GM12878 (cell line): ENCODE measurements at regions of chr20 and their contacts with region 1.

Region 1: GRCh38 chr20:25623736-25624499 is at the start of gene NANP:
- DNase-seq: peak; percentile 86
- ATAC-seq: peak; percentile 88
- H3K4me3 ChIP-seq: peak within 1 kb of the TSS; percentile 86
- H3K27ac ChIP-seq: peak within 1 kb of the TSS; percentile 93
- H3K4me1 ChIP-seq: peaks cover 3% of the 10 kb centered on the region; the same call in 1 of the 2 replicates
- H3K27me3 ChIP-seq: no peaks in the 10 kb centered on the region
- CTCF ChIP-seq: 0 out of 6 replicates have a peak, but pooled peaks of 1 of the 3 experiments have one; percentile 10
- EP300 ChIP-seq: peak in 1 of 2 experiments; percentile 17; a peak in 1 of 4 replicates
- POLR2A ChIP-seq: peak; percentile 86
- RAD21 ChIP-seq: no peak
- polyA plus RNA-seq, gene NANP: 4.2 to 4.6 TPM

Region 2: DNA sequence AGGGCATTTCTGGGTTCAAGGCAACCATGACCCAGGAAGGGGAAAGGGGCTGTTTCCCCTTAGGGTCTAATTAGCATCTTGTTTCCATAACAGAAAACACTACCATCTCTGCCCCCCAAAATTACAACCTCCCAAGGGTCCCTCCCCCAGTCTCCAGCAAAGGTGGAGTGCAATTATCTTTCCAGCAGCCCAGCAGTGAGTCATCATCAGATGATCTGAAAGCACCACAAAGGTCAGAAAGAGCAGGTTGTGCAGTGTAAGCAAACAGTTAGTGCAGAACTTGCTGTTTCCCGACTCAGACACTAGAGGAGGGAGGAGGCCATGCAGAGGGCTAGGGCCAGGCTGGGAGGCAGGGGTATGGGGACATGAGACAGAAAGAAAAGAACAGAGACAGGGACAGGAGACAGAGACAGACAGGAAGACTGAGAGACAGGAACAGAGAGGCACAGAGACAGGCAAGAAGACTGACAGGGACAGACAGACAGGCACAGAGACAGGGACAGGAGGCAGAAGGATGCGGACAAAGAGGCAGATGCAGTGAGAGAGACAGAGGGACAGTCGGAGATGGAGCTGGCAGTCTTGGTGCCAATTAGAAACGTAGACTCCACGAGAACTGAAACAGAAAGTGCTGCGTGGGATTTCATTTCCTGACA is 313.5 kb before region 1 on chr20:
- CTCF ChIA-PET with region 1: no interaction called
- POLR2A ChIA-PET with region 1: no interaction called
- RAD21 ChIA-PET with region 1: no interaction called
- SMC1A ChIA-PET with region 1: no interaction called
- in situ Hi-C with region 1: no loop called
- intact Hi-C with region 1: loop called (anchors 10 kb)
- DNase-seq: peak; percentile 67
- ATAC-seq: peak; percentile 97
- H3K4me3 ChIP-seq: peak overlapping the region; percentile 55; the same call in 1 of the 2 replicates
- H3K27ac ChIP-seq: peak overlapping the region; percentile 92
- H3K4me1 ChIP-seq: peaks cover 33% of the 10 kb centered on the region
- H3K27me3 ChIP-seq: no peaks in the 10 kb centered on the region
- CTCF ChIP-seq: peak; percentile 75 to 96 (median 84)
- EP300 ChIP-seq: peak; percentile 30 to 55; a peak in 2 of 4 replicates
- POLR2A ChIP-seq: peak; percentile 40; the same call in 1 of the 2 replicates
- RAD21 ChIP-seq: peak; percentile 91

Region 3: DNA sequence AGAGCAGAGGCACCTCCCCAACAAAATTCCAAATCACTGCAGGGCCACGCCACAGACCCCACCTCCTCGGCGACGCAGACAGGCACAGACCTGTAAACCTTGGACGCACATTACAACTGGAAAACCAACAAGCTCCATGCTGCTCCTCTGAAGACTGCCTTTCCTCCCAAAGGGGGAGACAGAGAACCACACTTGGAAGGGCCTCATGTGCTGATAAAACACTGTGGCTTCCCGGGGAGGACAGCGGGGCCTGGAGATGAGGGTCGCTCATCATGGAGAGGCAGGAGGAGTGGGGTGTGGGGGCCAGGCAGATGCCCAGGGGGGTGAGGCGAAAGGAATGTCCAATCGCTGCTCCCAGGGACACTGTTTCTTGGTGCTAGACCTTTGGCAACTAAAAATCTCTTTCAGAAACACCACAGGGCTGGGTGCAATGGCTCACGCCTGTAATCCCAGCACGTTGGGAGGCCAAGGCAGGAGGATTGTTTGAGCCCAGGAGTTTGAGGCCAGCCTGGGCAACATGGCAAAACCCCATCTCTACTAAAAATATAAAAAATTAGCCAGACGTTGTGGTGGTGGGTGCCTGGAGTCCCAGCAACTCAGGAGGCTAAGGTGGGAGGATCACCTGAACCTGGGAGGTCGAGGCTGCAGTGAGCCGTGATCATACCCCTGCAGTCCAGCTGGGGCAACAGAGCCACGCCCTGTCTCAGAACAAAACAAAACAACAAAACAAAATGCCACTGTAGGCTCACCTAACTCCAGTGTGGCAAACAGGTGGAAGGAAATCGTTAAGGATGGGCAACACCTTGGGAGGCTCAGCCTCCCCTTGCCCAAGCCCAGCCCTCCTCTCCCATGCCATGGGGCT is 287.1 kb before region 1 on chr20:
- CTCF ChIA-PET with region 1: no interaction called
- POLR2A ChIA-PET with region 1: no interaction called
- RAD21 ChIA-PET with region 1: no interaction called
- SMC1A ChIA-PET with region 1: no interaction called
- in situ Hi-C with region 1: no loop called
- intact Hi-C with region 1: no loop called
- DNase-seq: no peak
- ATAC-seq: no peak
- H3K4me3 ChIP-seq: no peak overlapping the region
- H3K27ac ChIP-seq: no peak overlapping the region
- H3K4me1 ChIP-seq: no peaks in the 10 kb centered on the region
- H3K27me3 ChIP-seq: no peaks in the 10 kb centered on the region
- CTCF ChIP-seq: peak in 1 of 3 experiments; percentile 8; a peak in 1 of 6 replicates
- EP300 ChIP-seq: no peak
- POLR2A ChIP-seq: no peak
- RAD21 ChIP-seq: peak; percentile 44

Region 4: GRCh38 chr20:25444556-25444955 is 179.4 kb before region 1 on chr20:
- CTCF ChIA-PET with region 1: no interaction called
- POLR2A ChIA-PET with region 1: no interaction called
- RAD21 ChIA-PET with region 1: no interaction called
- SMC1A ChIA-PET with region 1: interaction called, 3 read pairs
- in situ Hi-C with region 1: no loop called
- intact Hi-C with region 1: loop called (anchors 5 kb)
- DNase-seq: no peak
- ATAC-seq: no peak
- H3K4me3 ChIP-seq: no peak overlapping the region
- H3K27ac ChIP-seq: no peak overlapping the region
- H3K4me1 ChIP-seq: no peaks in the 10 kb centered on the region
- H3K27me3 ChIP-seq: no peaks in the 10 kb centered on the region
- CTCF ChIP-seq: no peak
- EP300 ChIP-seq: no peak
- POLR2A ChIP-seq: no peak
- RAD21 ChIP-seq: no peak

Region 5: GRCh38 chr20:25600632-25601031 is 23.3 kb before region 1 on chr20:
- CTCF ChIA-PET with region 1: no interaction called
- POLR2A ChIA-PET with region 1: no interaction called
- RAD21 ChIA-PET with region 1: no interaction called
- SMC1A ChIA-PET with region 1: no interaction called
- in situ Hi-C with region 1: no loop called
- intact Hi-C with region 1: no loop called
- DNase-seq: no peak
- ATAC-seq: no peak
- H3K4me3 ChIP-seq: no peak overlapping the region
- H3K27ac ChIP-seq: no peak overlapping the region
- H3K4me1 ChIP-seq: no peaks in the 10 kb centered on the region
- H3K27me3 ChIP-seq: no peaks in the 10 kb centered on the region
- CTCF ChIP-seq: no peak
- EP300 ChIP-seq: no peak
- POLR2A ChIP-seq: no peak
- RAD21 ChIP-seq: no peak

Region 6: GRCh38 chr20:25696384-25697131 is 72.6 kb after region 1 on chr20 and contains the start of gene ZNF337:
- CTCF ChIA-PET with region 1: no interaction called
- POLR2A ChIA-PET with region 1: no interaction called
- RAD21 ChIA-PET with region 1: no interaction called
- SMC1A ChIA-PET with region 1: interaction called, 3 read pairs
- in situ Hi-C with region 1: loop called (anchors 5 kb)
- intact Hi-C with region 1: loop called (anchors 1 kb)
- DNase-seq: peak; percentile 77
- ATAC-seq: peak; percentile 97
- H3K4me3 ChIP-seq: peak within 1 kb of the TSS; percentile 92
- H3K27ac ChIP-seq: peak within 1 kb of the TSS; percentile 86
- H3K4me1 ChIP-seq: peaks cover 18% of the 10 kb centered on the region
- H3K27me3 ChIP-seq: no peaks in the 10 kb centered on the region
- CTCF ChIP-seq: no peak
- EP300 ChIP-seq: no peak
- POLR2A ChIP-seq: peak; percentile 95
- RAD21 ChIP-seq: 0 out of 2 replicates have a peak, but pooled peaks have one; percentile 4
- polyA plus RNA-seq, gene ZNF337: 0.60 to 2.6 TPM

Region 7: GRCh38 chr20:25987073-25987927 is 363.4 kb after region 1 on chr20:
- CTCF ChIA-PET with region 1: no interaction called
- POLR2A ChIA-PET with region 1: no interaction called
- RAD21 ChIA-PET with region 1: no interaction called
- SMC1A ChIA-PET with region 1: no interaction called
- in situ Hi-C with region 1: loop called (anchors 5 kb)
- intact Hi-C with region 1: no loop called
- DNase-seq: no peak
- ATAC-seq: peak; percentile 92
- H3K4me3 ChIP-seq: peak overlapping the region; percentile 55; the same call in 1 of the 2 replicates
- H3K27ac ChIP-seq: no peak overlapping the region
- H3K4me1 ChIP-seq: no peaks in the 10 kb centered on the region; the same call in 1 of the 2 replicates
- H3K27me3 ChIP-seq: no peaks in the 10 kb centered on the region
- CTCF ChIP-seq: peak; percentile 26 to 40 (median 29); a peak in 3 of 6 replicates
- EP300 ChIP-seq: no peak
- POLR2A ChIP-seq: no peak
- RAD21 ChIP-seq: no peak

Region 8: GRCh38 chr20:26163890-26164289 is 540.0 kb after region 1 on chr20:
- CTCF ChIA-PET with region 1: no interaction called
- POLR2A ChIA-PET with region 1: no interaction called
- RAD21 ChIA-PET with region 1: no interaction called
- SMC1A ChIA-PET with region 1: no interaction called
- in situ Hi-C with region 1: loop called (anchors 25 kb)
- intact Hi-C with region 1: no loop called
- DNase-seq: no peak
- ATAC-seq: no peak
- H3K4me3 ChIP-seq: no peak overlapping the region
- H3K27ac ChIP-seq: no peak overlapping the region
- H3K4me1 ChIP-seq: no peaks in the 10 kb centered on the region
- H3K27me3 ChIP-seq: no peaks in the 10 kb centered on the region
- CTCF ChIP-seq: no peak
- EP300 ChIP-seq: no peak
- POLR2A ChIP-seq: no peak
- RAD21 ChIP-seq: no peak